ENCODE measurements at regions of chr13 and their contacts with region 1.

Region 1: GRCh38 chr13:109412283-109412901 is 374.0 kb downstream of the IRS2 start:
- DNase-seq: peak; percentile 93
- H3K4me3 ChIP-seq: peak overlapping the region; percentile 15
- H3K27ac ChIP-seq: peak overlapping the region; percentile 81
- H3K4me1 ChIP-seq: peaks cover 53% of the 10 kb centered on the region
- H3K27me3 ChIP-seq: no peaks in the 10 kb centered on the region
- CTCF ChIP-seq: no peak

Region 2: DNA sequence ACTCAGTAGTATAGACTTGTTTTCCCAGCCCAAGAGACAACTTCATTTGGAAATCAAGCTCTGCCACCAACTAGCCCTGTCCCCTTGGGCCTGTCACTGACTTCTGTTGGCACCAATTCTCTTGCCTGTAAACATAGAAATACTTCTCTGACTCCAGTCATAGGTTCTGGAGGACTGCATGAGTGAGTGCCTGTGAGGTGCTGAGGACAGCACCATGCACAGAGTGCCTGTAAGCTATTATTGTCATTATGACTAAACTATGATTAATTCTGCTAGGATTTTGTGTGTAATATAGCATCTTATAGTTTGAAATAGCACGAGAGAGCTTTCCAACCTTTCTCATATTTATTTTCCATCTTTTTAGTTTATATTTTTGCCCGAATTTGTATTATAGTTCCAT is 535.1 kb before region 1 on chr13:
- CTCF ChIA-PET with region 1: no interaction called
- POLR2A ChIA-PET with region 1: no interaction called
- intact Hi-C with region 1: no loop called
- DNase-seq: no peak
- H3K4me3 ChIP-seq: no peak overlapping the region
- H3K27ac ChIP-seq: no peak overlapping the region
- H3K4me1 ChIP-seq: no peaks in the 10 kb centered on the region
- H3K27me3 ChIP-seq: no peaks in the 10 kb centered on the region
- CTCF ChIP-seq: no peak

Region 3: GRCh38 chr13:109196948-109197347 is 215.4 kb before region 1 on chr13:
- CTCF ChIA-PET with region 1: no interaction called
- POLR2A ChIA-PET with region 1: no interaction called
- intact Hi-C with region 1: loop called (anchors 5 kb)
- DNase-seq: peak; percentile 56
- H3K4me3 ChIP-seq: no peak overlapping the region
- H3K27ac ChIP-seq: no peak overlapping the region
- H3K4me1 ChIP-seq: peaks cover 25% of the 10 kb centered on the region
- H3K27me3 ChIP-seq: no peaks in the 10 kb centered on the region
- CTCF ChIP-seq: peak; percentile 43

Region 4: GRCh38 chr13:109626386-109627171 is 214.2 kb after region 1 on chr13:
- CTCF ChIA-PET with region 1: no interaction called
- POLR2A ChIA-PET with region 1: no interaction called
- intact Hi-C with region 1: no loop called
- DNase-seq: no peak
- H3K4me3 ChIP-seq: no peak overlapping the region
- H3K27ac ChIP-seq: no peak overlapping the region
- H3K4me1 ChIP-seq: peaks cover 6% of the 10 kb centered on the region
- H3K27me3 ChIP-seq: no peaks in the 10 kb centered on the region
- CTCF ChIP-seq: no peak